ENCODE measurements at regions of chr13 and their contacts with region 1.

Region 1: GRCh38 chr13:40536443-40537113 is 129.9 kb downstream of the FOXO1 start:
- DNase-seq: peak; percentile 83 to 90 (median 86)
- ATAC-seq: peak; percentile 79 to 95 (median 90)
- H3K4me3 ChIP-seq: no peak overlapping the region
- H3K27ac ChIP-seq: peak overlapping the region; percentile 44 to 86 (median 78)
- H3K4me1 ChIP-seq: peaks cover 0 to 9% (median 9%) of the 10 kb centered on the region in 4 donors
- H3K27me3 ChIP-seq: no peaks in the 10 kb centered on the region
- CTCF ChIP-seq: no peak
- POLR2A ChIP-seq: no peak

Region 2: DNA sequence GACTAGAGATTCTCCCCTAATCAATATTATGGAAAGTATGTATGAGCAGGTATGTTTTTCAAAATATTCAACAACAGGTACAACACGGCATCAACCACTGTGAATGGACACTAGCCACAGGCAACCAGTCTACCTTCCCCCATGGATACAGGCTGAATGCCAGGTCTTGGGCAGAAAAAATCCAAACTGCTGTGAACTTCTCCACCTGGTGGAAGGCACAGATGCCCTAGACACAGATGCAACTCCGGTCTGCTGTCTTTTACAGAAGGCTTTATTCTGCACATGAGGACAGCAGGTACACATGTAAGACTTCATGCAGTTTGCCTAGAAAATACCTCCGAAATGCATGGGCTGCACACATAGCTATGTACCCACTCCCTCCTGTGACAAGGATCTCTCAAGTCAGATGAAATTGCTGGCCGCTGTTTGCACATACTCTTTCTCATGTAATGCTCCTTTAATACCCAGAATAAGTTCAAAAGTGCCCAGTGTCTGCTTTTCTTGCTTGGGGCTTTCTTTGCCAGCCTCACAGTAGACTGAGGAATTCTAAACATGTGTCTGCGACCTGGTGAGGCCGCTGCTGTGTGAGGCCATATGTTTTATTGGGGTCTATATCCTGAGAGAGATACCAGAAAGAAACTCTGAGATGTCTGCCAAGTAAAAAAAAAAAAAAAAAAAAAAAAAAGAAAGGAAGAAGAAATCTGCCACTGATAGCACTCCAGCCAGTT is 196.0 kb before region 1 on chr13:
- intact Hi-C with region 1: no loop called
- DNase-seq: peak in 2 of 3 donors; percentile 29 to 72
- ATAC-seq: peak in 3 of 4 donors; percentile 19 to 41 (median 28)
- H3K4me3 ChIP-seq: no peak overlapping the region
- H3K27ac ChIP-seq: peak overlapping the region in 1 of 3 donors; percentile 79
- H3K4me1 ChIP-seq: peaks cover 0 to 72% (median 20%) of the 10 kb centered on the region in 4 donors
- H3K27me3 ChIP-seq: no peaks in the 10 kb centered on the region
- CTCF ChIP-seq: peak; percentile 40 to 57 (median 48)
- POLR2A ChIP-seq: no peak

Region 3: GRCh38 chr13:40485611-40486517 is 50.7 kb before region 1 on chr13:
- intact Hi-C with region 1: loop called in 1 of 2 experiments (anchors 10 kb)
- DNase-seq: no peak
- ATAC-seq: peak; percentile 20 to 47 (median 32)
- H3K4me3 ChIP-seq: no peak overlapping the region
- H3K27ac ChIP-seq: no peak overlapping the region
- H3K4me1 ChIP-seq: no peaks in the 10 kb centered on the region
- H3K27me3 ChIP-seq: no peaks in the 10 kb centered on the region
- CTCF ChIP-seq: no peak
- POLR2A ChIP-seq: no peak

Region 4: DNA sequence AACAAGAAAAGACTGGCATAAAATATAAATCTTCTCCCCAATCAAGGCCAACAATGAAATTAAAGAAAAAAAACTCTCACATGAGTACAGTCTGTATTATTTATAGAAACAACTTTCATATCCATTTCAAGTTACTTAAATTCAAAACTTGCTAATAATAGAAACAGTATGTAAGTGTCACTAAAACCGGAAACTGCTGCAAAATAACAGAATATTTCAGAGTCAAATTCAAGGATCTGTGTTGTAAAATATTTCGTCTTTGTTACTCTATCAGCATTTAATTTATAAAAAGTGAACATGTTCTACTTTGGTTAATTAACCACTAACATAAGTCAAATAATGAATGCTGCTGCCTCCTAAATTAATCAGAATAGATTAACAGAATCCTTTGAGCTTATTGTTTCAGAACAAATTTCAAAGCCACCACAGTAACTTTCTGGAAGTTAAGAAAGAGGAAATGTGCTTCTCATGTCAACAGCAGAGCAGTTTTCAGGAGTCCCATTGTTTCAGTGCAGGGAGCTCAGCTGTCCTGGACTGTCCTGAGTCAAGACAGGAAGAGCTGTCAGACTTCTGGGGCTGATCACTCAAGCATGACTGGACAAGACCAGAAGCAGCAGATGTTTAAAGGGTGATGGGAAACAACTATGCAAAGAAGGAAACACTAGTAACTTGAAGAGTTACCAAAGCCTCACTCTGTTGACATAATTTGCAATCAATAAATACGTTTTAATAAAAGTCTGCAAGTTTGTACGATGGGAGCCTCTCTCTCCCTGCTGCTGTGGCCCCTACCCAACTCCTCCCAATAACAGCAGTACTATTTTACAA is 52.9 kb after region 1 on chr13:
- intact Hi-C with region 1: no loop called
- DNase-seq: no peak
- ATAC-seq: peak; percentile 70 to 82 (median 78)
- H3K4me3 ChIP-seq: no peak overlapping the region
- H3K27ac ChIP-seq: peak overlapping the region in 1 of 3 donors; percentile 2
- H3K4me1 ChIP-seq: peaks cover 0 to 53% (median 20%) of the 10 kb centered on the region in 4 donors
- H3K27me3 ChIP-seq: no peaks in the 10 kb centered on the region
- CTCF ChIP-seq: no peak
- POLR2A ChIP-seq: no peak

Region 5: DNA sequence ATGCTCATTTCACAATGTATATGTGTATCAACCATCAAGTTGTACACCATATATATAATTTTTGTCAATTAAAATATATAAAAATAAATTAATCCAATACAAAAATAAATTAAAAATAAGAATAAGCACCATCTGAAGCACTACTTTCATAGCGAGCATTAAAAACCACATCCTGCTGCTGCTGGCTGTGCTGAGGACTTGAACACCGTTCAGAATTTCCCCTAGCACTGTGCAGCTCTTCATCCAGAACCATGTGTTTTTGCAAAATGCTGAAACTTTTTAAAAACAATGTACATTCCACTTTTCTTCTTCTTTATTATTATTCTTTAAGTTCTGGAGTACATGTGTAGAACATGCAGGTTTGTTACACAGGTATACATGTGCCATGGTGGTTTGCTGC is 169.9 kb after region 1 on chr13:
- intact Hi-C with region 1: no loop called
- DNase-seq: no peak
- ATAC-seq: no peak
- H3K4me3 ChIP-seq: no peak overlapping the region
- H3K27ac ChIP-seq: no peak overlapping the region
- H3K4me1 ChIP-seq: no peaks in the 10 kb centered on the region
- H3K27me3 ChIP-seq: no peaks in the 10 kb centered on the region
- CTCF ChIP-seq: no peak
- POLR2A ChIP-seq: no peak

Measured in right lobe of liver (tissue), 6 donors.